GM23248 (cell line): ENCODE measurements at regions of chr3 and their contacts with region 1.

Region 1: GRCh38 chr3:50121416-50122032 is 32.8 kb downstream of the RBM5 start:
- DNase-seq: peak; percentile 82
- H3K4me3 ChIP-seq: no peak overlapping the region
- H3K27ac ChIP-seq: no peak overlapping the region
- H3K4me1 ChIP-seq: 0 out of 2 replicates have a peak, but pooled peaks cover 4% of the 10 kb centered on the region
- H3K27me3 ChIP-seq: no peaks in the 10 kb centered on the region

Region 2: GRCh38 chr3:50189274-50189673 is 67.8 kb after region 1 on chr3:
- in situ Hi-C with region 1: loop called (anchors 10 kb)
- DNase-seq: peak; percentile 94
- H3K4me3 ChIP-seq: no peak overlapping the region
- H3K27ac ChIP-seq: no peak overlapping the region
- H3K4me1 ChIP-seq: no peaks in the 10 kb centered on the region
- H3K27me3 ChIP-seq: peaks cover 12% of the 10 kb centered on the region

Region 3: GRCh38 chr3:50327943-50328691 is 206.6 kb after region 1 on chr3 and contains the start of gene TUSC2:
- in situ Hi-C with region 1: no loop called
- DNase-seq: peak; percentile 100
- H3K4me3 ChIP-seq: peak within 1 kb of the TSS; percentile 82
- H3K27ac ChIP-seq: peak within 1 kb of the TSS; percentile 76
- H3K4me1 ChIP-seq: peaks cover 15% of the 10 kb centered on the region
- H3K27me3 ChIP-seq: no peaks in the 10 kb centered on the region
- total RNA-seq, gene TUSC2: 14.3 and 32.5 TPM in 2 replicates